Heart left ventricle (tissue), 16 donors: ENCODE measurements at regions of chr16 and their contacts with region 1.

Region 1: GRCh38 chr16:88700636-88701482 is 5.3 kb downstream of the RNF166 start:
- DNase-seq: peak; percentile 94 to 97 (median 96)
- ATAC-seq: peak; percentile 81 to 91 (median 83)
- H3K4me3 ChIP-seq: peak overlapping the region in 9 of 12 donors; percentile 13 to 99 (median 32)
- H3K27ac ChIP-seq: peak overlapping the region; percentile 54 to 97 (median 76)
- H3K4me1 ChIP-seq: peaks cover 4 to 66% (median 49%) of the 10 kb centered on the region in 12 donors
- H3K27me3 ChIP-seq: no peaks in the 10 kb centered on the region
- CTCF ChIP-seq: no peak
- POLR2A ChIP-seq: peak in 1 of 2 donors; percentile 15

Region 2: DNA sequence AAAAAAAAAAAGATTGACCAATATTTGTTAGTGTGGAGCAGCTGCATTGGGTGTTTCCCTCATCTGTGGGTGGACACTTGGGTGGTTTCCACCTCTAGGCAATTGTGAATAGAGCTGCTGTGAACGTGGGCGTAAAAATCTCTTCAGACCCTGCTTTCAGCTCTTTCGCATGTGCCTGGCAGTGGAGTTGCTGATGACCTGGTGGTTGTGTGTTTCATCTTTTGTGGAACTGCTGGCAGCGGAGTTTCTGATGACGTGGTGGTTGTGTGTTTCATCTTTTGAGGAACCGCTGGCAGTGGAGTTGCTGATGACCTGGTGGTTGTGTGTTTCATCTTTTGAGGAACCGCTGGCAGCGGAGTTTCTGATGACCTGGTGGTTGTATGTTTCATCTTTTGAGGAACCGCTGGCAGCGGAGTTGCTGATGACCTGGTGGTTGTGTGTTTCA is 109.3 kb before region 1 on chr16:
- intact Hi-C with region 1: loop called in 3 of 10 experiments (anchors 5 to 10 kb)
- DNase-seq: peak in 4 of 5 donors; percentile 24 to 66 (median 49)
- ATAC-seq: peak in 3 of 4 donors; percentile 27 to 71 (median 46)
- H3K4me3 ChIP-seq: no peak overlapping the region
- H3K27ac ChIP-seq: peak overlapping the region in 1 of 12 donors; percentile 60
- H3K4me1 ChIP-seq: peaks cover 0 to 41% (median 17%) of the 10 kb centered on the region in 12 donors
- H3K27me3 ChIP-seq: no peaks in the 10 kb centered on the region
- CTCF ChIP-seq: no peak
- POLR2A ChIP-seq: no peak

Region 3: GRCh38 chr16:88650749-88651275 is 50.0 kb before region 1 on chr16 and contains the start of gene CYBA:
- intact Hi-C with region 1: loop called in 1 of 10 experiments (anchors 5 kb)
- DNase-seq: peak; percentile 77 to 92 (median 84)
- ATAC-seq: peak; percentile 80 to 91 (median 86)
- H3K4me3 ChIP-seq: peak within 1 kb of the TSS; percentile 51 to 91 (median 76)
- H3K27ac ChIP-seq: peak within 1 kb of the TSS; percentile 17 to 94 (median 74)
- H3K4me1 ChIP-seq: peaks cover 0 to 49% (median 14%) of the 10 kb centered on the region in 12 donors
- H3K27me3 ChIP-seq: no peaks in the 10 kb centered on the region
- CTCF ChIP-seq: no peak
- POLR2A ChIP-seq: peak in 1 of 2 donors; percentile 30
- total RNA-seq, gene CYBA: 22.6 to 227 (median 34.4) TPM

Region 4: DNA sequence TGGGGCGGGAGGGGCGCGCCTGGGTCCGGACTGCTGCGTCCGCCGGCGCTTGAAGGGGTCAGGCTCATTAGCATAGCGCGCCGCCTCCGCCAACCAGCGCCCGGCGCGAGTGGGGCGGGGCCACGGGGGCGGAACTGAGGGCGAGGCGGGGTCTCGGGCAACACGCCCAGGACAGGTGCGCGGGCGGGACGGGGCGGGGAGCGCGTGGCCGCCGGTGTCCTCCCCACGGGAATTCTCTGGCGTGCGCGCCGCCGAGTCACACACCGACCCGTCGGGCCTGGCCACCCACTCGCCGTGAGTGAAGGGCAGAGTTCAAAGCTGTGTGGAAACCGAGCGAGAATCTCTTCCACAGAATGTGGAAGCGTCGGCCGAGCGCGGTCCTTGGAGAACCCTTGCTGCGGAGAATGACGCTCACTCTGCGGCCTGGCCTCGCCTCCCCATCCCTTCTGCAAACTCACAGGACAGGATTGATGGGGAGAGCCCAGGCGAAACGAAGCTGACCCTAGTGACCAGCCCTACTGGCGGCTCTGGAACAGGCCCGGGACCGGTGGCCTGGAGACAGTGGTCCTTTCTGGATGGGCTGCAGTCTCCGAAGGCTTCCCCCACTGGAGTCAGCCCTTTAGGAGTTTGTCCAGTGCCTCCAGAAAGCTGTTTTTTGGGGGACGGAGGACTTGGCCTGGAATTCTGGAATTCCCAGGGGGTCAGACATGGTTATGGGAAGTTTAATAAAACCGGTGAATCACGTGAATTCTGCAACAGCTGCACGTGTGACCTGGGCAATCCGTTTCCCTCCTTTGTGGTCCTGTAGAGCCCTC is 14.2 kb before region 1 on chr16 and contains the start of gene SNAI3:
- intact Hi-C with region 1: no loop called
- DNase-seq: peak; percentile 81 to 93 (median 87)
- ATAC-seq: peak; percentile 68 to 95 (median 90)
- H3K4me3 ChIP-seq: peak within 1 kb of the TSS; percentile 33 to 78 (median 59)
- H3K27ac ChIP-seq: peak within 1 kb of the TSS in 5 of 12 donors; percentile 11 to 83 (median 34)
- H3K4me1 ChIP-seq: peaks cover 0 to 45% (median 23%) of the 10 kb centered on the region in 12 donors
- H3K27me3 ChIP-seq: peaks cover 0 to 76% (median 13%) of the 10 kb centered on the region in 9 donors
- CTCF ChIP-seq: no peak
- POLR2A ChIP-seq: no peak
- total RNA-seq, gene SNAI3: 0.76 to 9.5 (median 1.4) TPM